Activated CD4-positive, alpha-beta T cell treated with anti-CD3 and anti-CD28 coated beads for 36 hours (primary cell): ENCODE measurements at regions of chr18 and their contacts with region 1.

Region 1: GRCh38 chr18:46013484-46014189 is 46.5 kb upstream of the EPG5 start:
- DNase-seq: peak; percentile 16
- ATAC-seq: peak; percentile 91
- H3K4me3 Mint-ChIP-seq: peak overlapping the region; percentile 20
- H3K27ac Mint-ChIP-seq: no peak overlapping the region
- H3K4me1 Mint-ChIP-seq: peaks cover 18% of the 10 kb centered on the region
- H3K27me3 Mint-ChIP-seq: no peaks in the 10 kb centered on the region

Region 2: GRCh38 chr18:44725300-44726096 is 1288.1 kb before region 1 on chr18:
- CTCF ChIA-PET with region 1: no interaction called
- POLR2A ChIA-PET with region 1: no interaction called
- intact Hi-C with region 1: loop called in 1 of 2 experiments (anchors 1 kb)
- DNase-seq: peak; percentile 81
- ATAC-seq: peak; percentile 78
- H3K4me3 Mint-ChIP-seq: peak overlapping the region; percentile 17
- H3K27ac Mint-ChIP-seq: peak overlapping the region; percentile 80
- H3K4me1 Mint-ChIP-seq: peaks cover 80% of the 10 kb centered on the region
- H3K27me3 Mint-ChIP-seq: peaks cover 2% of the 10 kb centered on the region

Region 3: DNA sequence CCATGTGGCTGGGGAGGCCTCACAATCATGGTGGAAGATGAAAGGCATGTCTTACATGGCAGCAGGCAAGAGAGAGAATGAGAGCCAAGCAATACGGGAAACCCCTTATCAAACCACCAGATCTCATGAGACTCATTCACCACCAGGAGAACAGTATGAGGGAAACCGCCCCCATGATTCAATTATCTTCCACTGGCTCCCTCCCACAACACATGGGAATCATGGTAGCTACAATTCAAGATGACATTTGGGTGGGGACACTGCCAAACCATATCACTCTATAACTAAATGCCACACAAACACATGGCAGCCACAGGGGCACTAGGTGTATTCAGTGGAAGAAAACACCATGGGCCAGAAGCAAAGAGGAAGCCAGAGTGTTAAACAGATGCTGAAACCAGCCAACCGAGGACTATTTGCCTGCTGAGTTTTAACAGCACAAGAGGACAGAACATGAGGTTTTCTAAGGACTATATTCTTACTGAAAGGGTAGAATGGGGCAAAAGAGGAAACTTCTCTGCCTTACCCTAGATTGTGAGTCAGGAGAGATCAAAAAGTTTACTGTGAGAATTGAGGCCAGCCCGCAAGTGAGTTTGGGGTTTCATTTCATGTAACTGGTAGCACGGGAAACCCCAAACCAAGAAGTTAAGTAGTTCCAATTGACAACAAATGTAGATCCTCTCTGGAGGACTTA is 139.0 kb before region 1 on chr18:
- CTCF ChIA-PET with region 1: no interaction called
- POLR2A ChIA-PET with region 1: interaction called, 3 read pairs
- intact Hi-C with region 1: loop called in 1 of 2 experiments (anchors 1 kb)
- DNase-seq: peak; percentile 84
- ATAC-seq: peak; percentile 91
- H3K4me3 Mint-ChIP-seq: peak overlapping the region; percentile 41
- H3K27ac Mint-ChIP-seq: peak overlapping the region; percentile 96
- H3K4me1 Mint-ChIP-seq: peaks cover 34% of the 10 kb centered on the region
- H3K27me3 Mint-ChIP-seq: no peaks in the 10 kb centered on the region

Region 4: GRCh38 chr18:45997700-45998151 is 15.9 kb before region 1 on chr18:
- CTCF ChIA-PET with region 1: interaction called, 3 read pairs
- POLR2A ChIA-PET with region 1: no interaction called
- intact Hi-C with region 1: loop called in 1 of 2 experiments (anchors 1 kb)
- DNase-seq: peak; percentile 57
- ATAC-seq: peak; percentile 91
- H3K4me3 Mint-ChIP-seq: peak overlapping the region; percentile 64
- H3K27ac Mint-ChIP-seq: peak overlapping the region; percentile 79
- H3K4me1 Mint-ChIP-seq: peaks cover 37% of the 10 kb centered on the region
- H3K27me3 Mint-ChIP-seq: no peaks in the 10 kb centered on the region

Region 5: GRCh38 chr18:46054956-46055837 is 41.6 kb after region 1 on chr18:
- CTCF ChIA-PET with region 1: no interaction called
- POLR2A ChIA-PET with region 1: no interaction called
- intact Hi-C with region 1: loop called in 1 of 2 experiments (anchors 5 kb)
- DNase-seq: peak; percentile 12
- ATAC-seq: peak; percentile 74
- H3K4me3 Mint-ChIP-seq: peak overlapping the region; percentile 8
- H3K27ac Mint-ChIP-seq: peak overlapping the region; percentile 41
- H3K4me1 Mint-ChIP-seq: peaks cover 40% of the 10 kb centered on the region
- H3K27me3 Mint-ChIP-seq: no peaks in the 10 kb centered on the region

Region 6: GRCh38 chr18:46250084-46250811 is 236.6 kb after region 1 on chr18:
- CTCF ChIA-PET with region 1: no interaction called
- POLR2A ChIA-PET with region 1: no interaction called
- intact Hi-C with region 1: loop called in 1 of 2 experiments (anchors 1 kb)
- DNase-seq: peak; percentile 61
- ATAC-seq: peak; percentile 90
- H3K4me3 Mint-ChIP-seq: peak overlapping the region; percentile 62
- H3K27ac Mint-ChIP-seq: peak overlapping the region; percentile 97
- H3K4me1 Mint-ChIP-seq: peaks cover 64% of the 10 kb centered on the region
- H3K27me3 Mint-ChIP-seq: no peaks in the 10 kb centered on the region

Region 7: GRCh38 chr18:47246027-47246971 is 1232.7 kb after region 1 on chr18:
- CTCF ChIA-PET with region 1: no interaction called
- POLR2A ChIA-PET with region 1: no interaction called
- intact Hi-C with region 1: no loop called
- DNase-seq: no peak
- ATAC-seq: no peak
- H3K4me3 Mint-ChIP-seq: no peak overlapping the region
- H3K27ac Mint-ChIP-seq: no peak overlapping the region
- H3K4me1 Mint-ChIP-seq: peaks cover 10% of the 10 kb centered on the region
- H3K27me3 Mint-ChIP-seq: peaks cover 60% of the 10 kb centered on the region